Activated CD4-positive, alpha-beta memory T cell treated with anti-CD3 and anti-CD28 coated beads, Interleukin-2, amount 10 ng/mL, durations not matched to agents 7 days and 5 days (primary cell): ENCODE measurements at regions of chr1 and their contacts with region 1.

Region 1: DNA sequence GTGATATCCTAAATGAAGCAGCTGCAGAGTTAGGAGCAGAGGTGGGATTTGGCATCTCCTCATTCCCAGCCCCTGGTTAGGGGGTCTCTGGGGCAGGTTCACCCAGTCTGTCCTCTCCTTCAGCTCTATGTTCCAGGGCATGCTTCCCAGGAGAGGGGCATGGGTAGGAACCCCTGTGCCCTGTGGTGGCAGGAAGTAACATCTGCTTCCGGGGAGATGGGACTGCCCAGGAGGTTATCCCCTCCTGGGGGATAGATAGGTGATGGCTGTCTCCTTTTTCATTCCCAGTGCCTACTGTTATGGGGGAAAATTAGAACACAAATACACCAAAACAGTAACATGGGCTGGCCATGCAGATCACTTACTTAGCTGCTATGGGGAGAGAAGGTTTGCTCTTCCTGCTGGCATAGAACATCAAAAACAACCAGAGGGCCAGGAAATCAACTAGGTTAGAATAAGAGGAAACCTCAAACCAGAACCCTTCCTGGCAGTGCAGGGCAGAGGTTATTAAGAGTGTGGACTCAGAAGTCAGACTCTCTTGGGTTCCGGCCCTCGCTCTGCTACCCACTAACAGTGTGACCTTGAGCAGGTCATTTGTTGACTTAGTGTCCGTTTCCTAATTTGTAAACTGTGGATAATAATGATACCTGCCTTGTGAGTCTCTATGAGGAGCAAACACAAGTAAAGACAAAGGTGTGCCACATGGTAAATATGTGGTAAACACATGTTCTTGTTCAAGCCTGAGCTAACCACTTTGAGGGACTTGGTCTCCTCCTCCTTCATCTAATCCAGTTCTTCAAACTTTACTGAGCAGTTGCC is 157.8 kb upstream of the JUN start:
- DNase-seq: peak; percentile 71
- H3K4me3 Mint-ChIP-seq: peak overlapping the region; percentile 42
- H3K27ac Mint-ChIP-seq: peak overlapping the region; percentile 83
- H3K4me1 Mint-ChIP-seq: peaks cover 59% of the 10 kb centered on the region
- H3K27me3 Mint-ChIP-seq: peaks cover 4% of the 10 kb centered on the region

Region 2: GRCh38 chr1:58922302-58923089 is 19.2 kb before region 1 on chr1:
- CTCF ChIA-PET with region 1: interaction called, 5 read pairs
- POLR2A ChIA-PET with region 1: interaction called, 10 read pairs
- DNase-seq: peak; percentile 69
- H3K4me3 Mint-ChIP-seq: no peak overlapping the region
- H3K27ac Mint-ChIP-seq: peak overlapping the region; percentile 77
- H3K4me1 Mint-ChIP-seq: peaks cover 26% of the 10 kb centered on the region
- H3K27me3 Mint-ChIP-seq: peaks cover under 1% of the 10 kb centered on the region

Region 3: DNA sequence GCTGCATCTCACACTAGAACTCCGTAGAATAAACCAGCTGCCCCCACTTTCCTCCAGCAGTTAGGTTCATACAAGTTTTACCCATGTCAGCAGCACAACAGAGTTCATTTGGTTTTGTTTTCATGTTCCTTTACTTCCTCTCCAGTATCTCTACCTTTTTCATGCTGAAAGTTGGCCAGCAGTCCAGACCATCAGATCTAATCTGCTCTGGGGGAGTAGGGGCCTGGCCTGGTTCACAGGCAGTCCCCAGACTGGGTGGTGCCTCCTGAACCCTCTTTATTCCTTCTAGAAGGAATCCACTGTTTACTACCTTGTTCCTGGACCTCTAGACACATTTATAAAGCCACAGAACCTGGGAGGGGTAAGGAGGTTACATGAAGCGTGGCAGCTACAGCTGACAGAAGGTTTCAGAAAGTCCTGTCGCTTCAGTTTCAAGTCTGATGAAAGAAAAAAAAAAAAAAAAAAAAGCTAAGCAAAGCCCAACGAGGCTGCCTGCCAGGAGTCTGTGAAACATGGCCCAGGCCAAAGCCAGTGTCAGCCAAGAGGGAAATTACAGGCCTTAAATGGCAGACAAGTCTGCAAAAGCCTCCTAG is 26.8 kb after region 1 on chr1:
- CTCF ChIA-PET with region 1: interaction called, 4 read pairs
- POLR2A ChIA-PET with region 1: interaction called, 30 read pairs
- DNase-seq: peak; percentile 44
- H3K4me3 Mint-ChIP-seq: peak overlapping the region; percentile 38
- H3K27ac Mint-ChIP-seq: peak overlapping the region; percentile 97
- H3K4me1 Mint-ChIP-seq: peaks cover 34% of the 10 kb centered on the region
- H3K27me3 Mint-ChIP-seq: no peaks in the 10 kb centered on the region

Region 4: DNA sequence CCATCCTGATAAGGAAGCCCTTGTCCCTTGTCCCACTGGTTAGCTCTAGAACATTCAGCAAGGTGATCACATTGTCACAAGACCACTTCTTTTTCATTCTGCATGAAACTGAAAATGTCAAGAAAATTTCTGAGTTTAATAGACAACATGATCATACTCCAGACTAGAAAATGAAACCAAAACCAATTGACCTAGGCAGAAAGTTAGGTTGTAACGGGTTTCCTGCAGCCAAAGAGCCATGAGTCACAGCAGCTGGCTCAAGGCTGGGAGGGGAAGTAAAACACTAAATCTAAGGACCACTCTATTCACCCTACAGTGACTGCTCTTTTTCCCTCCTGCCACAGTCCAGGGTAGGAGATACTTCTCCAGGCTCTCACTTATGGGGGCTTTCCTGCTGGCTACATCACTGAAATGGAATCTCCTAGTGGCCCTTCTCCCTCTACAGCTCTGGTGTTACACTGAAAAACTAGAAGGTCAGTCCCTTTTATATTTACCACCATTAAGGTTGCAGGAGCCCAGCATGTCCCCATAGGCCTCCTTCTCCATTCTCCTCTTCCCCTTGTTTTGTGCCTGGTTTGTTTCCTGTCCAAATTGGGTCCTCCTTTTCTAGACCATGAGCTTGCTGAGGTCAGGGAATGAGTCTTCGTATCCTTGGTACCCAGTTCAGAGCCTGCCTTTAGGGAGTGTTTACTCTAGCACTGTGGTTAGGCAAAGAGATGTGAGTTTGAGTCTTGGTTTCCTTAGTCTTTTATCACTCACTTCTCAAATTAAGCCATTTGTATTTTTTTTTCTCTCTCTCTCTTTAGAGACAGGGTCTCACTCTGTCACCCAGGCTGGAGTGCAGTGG is 78.7 kb after region 1 on chr1:
- CTCF ChIA-PET with region 1: no interaction called
- POLR2A ChIA-PET with region 1: interaction called, 15 read pairs
- DNase-seq: peak; percentile 63
- H3K4me3 Mint-ChIP-seq: peak overlapping the region; percentile 70
- H3K27ac Mint-ChIP-seq: peak overlapping the region; percentile 97
- H3K4me1 Mint-ChIP-seq: peaks cover 42% of the 10 kb centered on the region
- H3K27me3 Mint-ChIP-seq: no peaks in the 10 kb centered on the region

Region 5: GRCh38 chr1:59055908-59056719 is 114.4 kb after region 1 on chr1:
- CTCF ChIA-PET with region 1: no interaction called
- POLR2A ChIA-PET with region 1: no interaction called
- DNase-seq: no peak
- H3K4me3 Mint-ChIP-seq: no peak overlapping the region
- H3K27ac Mint-ChIP-seq: no peak overlapping the region
- H3K4me1 Mint-ChIP-seq: peaks cover 3% of the 10 kb centered on the region
- H3K27me3 Mint-ChIP-seq: peaks cover 4% of the 10 kb centered on the region